HepG2 (cell line): ENCODE measurements at regions of chr12 and their contacts with region 1.

Region 1: DNA sequence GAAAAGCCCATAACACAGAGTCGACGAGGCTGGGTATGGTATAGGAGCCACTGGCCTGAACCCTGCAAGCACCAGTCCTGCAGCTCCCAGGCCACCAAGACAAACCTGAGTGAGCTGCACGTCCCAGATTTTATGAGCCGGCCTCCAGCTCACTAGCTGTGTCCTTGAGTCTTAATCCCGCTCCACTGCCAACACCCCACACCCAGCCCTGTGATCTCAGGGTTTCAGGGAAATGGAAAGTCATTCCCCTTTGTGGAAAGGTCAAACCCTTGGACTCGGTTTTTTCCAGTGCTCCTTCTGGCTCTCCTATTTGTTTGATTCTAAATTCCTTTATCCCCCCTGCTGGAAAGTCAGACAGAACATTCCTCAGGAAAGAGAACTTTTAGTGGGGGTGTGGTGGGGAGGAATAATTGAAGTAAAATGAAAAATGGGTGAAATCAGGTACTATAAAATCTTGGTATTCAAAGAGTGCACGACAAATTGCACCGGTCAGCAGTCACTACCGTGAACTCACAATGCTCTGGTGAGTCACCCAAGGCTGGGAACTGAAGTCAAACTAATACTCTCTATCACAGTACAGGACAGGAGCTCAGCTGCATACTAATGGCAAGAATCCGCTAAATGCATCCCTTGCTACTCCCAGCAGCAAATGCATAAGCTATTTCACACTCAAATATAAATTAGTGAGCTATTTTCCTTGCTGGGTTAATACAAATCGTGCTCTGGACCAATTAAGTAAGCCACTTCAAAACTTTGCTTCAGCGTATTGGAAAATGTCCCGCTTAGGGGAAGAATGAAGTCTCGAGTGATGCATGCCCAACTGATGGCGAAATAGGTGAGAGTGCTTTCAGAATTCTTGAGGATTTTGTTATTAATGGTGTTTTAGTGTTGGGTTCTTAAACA is 9.0 kb downstream of the PITPNM2 start:
- DNase-seq: peak; percentile 87
- ATAC-seq: peak; percentile 75
- H3K4me3 ChIP-seq: peak overlapping the region; percentile 43 to 71 (median 46); a peak in 5 of 6 replicates
- H3K27ac ChIP-seq: peak overlapping the region; percentile 97
- H3K4me1 ChIP-seq: peaks cover 68% of the 10 kb centered on the region
- H3K27me3 ChIP-seq: no peaks in the 10 kb centered on the region
- CTCF ChIP-seq: no peak
- EP300 ChIP-seq: peak in 1 of 2 experiments; percentile 85; a peak in 2 of 4 replicates
- POLR2A ChIP-seq: peak; percentile 68 to 73
- RAD21 ChIP-seq: no peak

Region 2: GRCh38 chr12:123062681-123063486 is 79.0 kb before region 1 on chr12:
- CTCF ChIA-PET with region 1: no interaction called
- POLR2A ChIA-PET with region 1: interaction called, 10 read pairs
- in situ Hi-C with region 1: no loop called
- intact Hi-C with region 1: no loop called
- DNase-seq: peak; percentile 91
- ATAC-seq: peak; percentile 93
- H3K4me3 ChIP-seq: peak overlapping the region in 1 of 3 experiments; percentile 53; a peak in 2 of 6 replicates
- H3K27ac ChIP-seq: peak overlapping the region; percentile 92
- H3K4me1 ChIP-seq: peaks cover 33% of the 10 kb centered on the region
- H3K27me3 ChIP-seq: no peaks in the 10 kb centered on the region
- CTCF ChIP-seq: no peak
- EP300 ChIP-seq: peak in 1 of 2 experiments; percentile 65; a peak in 1 of 4 replicates
- POLR2A ChIP-seq: peak in 1 of 2 experiments; percentile 62; a peak in 1 of 4 replicates
- RAD21 ChIP-seq: peak; percentile 19; the same call in 1 of the 2 replicates

Region 3: GRCh38 chr12:123089631-123090353 is 52.1 kb before region 1 on chr12:
- CTCF ChIA-PET with region 1: no interaction called
- POLR2A ChIA-PET with region 1: interaction called, 11 read pairs
- in situ Hi-C with region 1: no loop called
- intact Hi-C with region 1: loop called (anchors 5 kb)
- DNase-seq: peak; percentile 88
- ATAC-seq: peak; percentile 73
- H3K4me3 ChIP-seq: no peak overlapping the region
- H3K27ac ChIP-seq: peak overlapping the region; percentile 36
- H3K4me1 ChIP-seq: peaks cover 85% of the 10 kb centered on the region
- H3K27me3 ChIP-seq: no peaks in the 10 kb centered on the region
- CTCF ChIP-seq: no peak
- EP300 ChIP-seq: peak in 1 of 2 experiments; percentile 50; a peak in 1 of 4 replicates
- POLR2A ChIP-seq: no peak
- RAD21 ChIP-seq: no peak

Region 4: DNA sequence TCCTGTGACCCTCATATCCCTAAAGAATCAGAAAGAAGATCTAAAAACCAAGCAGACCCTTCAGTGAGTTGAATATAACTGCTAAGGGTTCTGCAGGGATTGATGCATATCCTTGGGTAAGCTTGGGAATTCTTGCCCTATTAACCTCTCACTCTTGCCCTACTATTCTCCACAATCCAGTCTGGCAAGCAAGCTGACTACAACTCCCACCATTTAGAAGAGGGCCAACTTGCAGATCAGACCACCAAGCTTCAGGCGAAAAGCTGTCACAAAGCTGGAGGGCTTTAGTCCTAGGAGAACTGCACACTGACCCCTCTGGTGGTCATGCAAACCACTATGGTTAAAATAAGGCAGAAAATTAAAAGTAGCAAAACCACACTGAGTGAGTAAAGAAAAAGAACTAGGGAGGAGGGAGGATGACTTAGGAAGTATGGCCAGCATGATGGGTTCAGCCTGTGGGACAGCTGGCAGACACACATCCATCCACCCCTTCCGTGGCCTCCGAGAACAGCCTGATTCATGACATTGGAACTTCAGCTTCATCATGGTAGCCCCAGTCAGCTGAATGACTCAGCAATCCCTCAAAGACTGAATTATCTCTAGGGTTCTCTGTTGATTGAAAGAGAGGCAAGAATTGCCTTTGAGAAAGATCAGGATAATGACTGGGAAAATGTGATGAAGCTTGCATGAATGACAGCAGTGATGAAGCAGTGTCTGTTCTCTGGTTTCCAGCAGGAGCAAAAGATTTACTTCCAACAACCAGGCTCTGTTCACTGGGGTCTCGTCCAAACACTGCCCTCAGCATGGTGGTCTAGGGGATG is 15.5 kb before region 1 on chr12:
- CTCF ChIA-PET with region 1: no interaction called
- POLR2A ChIA-PET with region 1: interaction called, 19 read pairs
- in situ Hi-C with region 1: no loop called
- intact Hi-C with region 1: no loop called
- DNase-seq: peak; percentile 83
- ATAC-seq: peak; percentile 85
- H3K4me3 ChIP-seq: no peak overlapping the region
- H3K27ac ChIP-seq: peak overlapping the region; percentile 43
- H3K4me1 ChIP-seq: peaks cover 32% of the 10 kb centered on the region
- H3K27me3 ChIP-seq: no peaks in the 10 kb centered on the region
- CTCF ChIP-seq: no peak
- EP300 ChIP-seq: peak in 1 of 2 experiments; percentile 61; a peak in 2 of 4 replicates
- POLR2A ChIP-seq: no peak
- RAD21 ChIP-seq: no peak